B cell (primary cell): ENCODE measurements at regions of chr2 and their contacts with region 1.

Region 1: DNA sequence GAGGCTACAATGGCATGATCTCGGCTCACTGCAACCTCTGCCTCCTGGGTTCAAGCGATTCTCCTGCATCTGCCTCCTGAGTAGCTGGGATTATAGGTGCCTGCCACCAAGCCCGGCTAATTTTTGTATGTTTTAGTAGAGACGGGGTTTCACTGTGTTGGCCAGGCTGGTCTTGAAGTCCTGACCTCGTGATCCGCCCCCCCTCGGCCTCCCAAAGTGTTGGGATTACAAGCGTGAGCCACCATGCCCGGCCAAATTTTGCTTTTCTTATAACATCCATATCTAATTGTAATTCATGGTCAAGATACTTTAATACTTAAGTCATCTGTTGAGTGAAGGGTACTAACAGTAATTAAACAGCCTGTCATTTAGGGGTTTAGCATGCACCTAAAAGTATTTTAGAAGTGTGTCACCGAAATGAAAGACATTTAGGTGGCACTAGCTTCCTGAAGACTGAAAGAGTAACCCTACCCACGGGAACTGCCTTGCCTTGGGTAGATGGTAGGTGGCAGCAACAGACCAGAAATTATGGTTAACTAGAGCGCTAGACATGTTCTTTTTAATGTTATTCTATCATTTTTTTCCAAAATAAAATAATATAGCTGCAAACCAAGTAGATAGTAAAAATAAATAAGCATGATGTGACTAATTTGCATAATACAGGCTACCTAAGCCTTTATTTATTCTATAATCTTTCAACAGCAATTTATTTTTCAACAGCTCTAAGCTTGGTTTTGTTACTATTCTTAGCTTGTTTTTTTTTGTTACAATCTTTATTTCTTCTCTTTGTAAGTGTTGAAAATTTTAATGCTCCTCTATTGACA is 8.6 kb upstream of the ACYP2 start:
- DNase-seq: peak; percentile 74
- ATAC-seq: peak; percentile 31
- H3K4me3 ChIP-seq: no peak overlapping the region
- H3K4me3 Mint-ChIP-seq: peak overlapping the region; percentile 18
- H3K27ac ChIP-seq: no peak overlapping the region
- H3K27ac Mint-ChIP-seq: peak overlapping the region; percentile 41
- H3K4me1 ChIP-seq: peaks cover 39 to 40% of the 10 kb centered on the region in 2 donors
- H3K4me1 Mint-ChIP-seq: peaks cover 53% of the 10 kb centered on the region
- H3K27me3 ChIP-seq: no peaks in the 10 kb centered on the region
- H3K27me3 Mint-ChIP-seq: no peaks in the 10 kb centered on the region
- CTCF ChIP-seq: peak; percentile 80

Region 2: GRCh38 chr2:53786705-53787612 is 319.9 kb before region 1 on chr2 and contains the starts of genes ASB3 and ERLEC1:
- CTCF ChIA-PET with region 1: no interaction called
- POLR2A ChIA-PET with region 1: no interaction called
- intact Hi-C with region 1: loop called (anchors 5 kb)
- DNase-seq: peak; percentile 92
- ATAC-seq: peak; percentile 92
- H3K4me3 ChIP-seq: peak within 1 kb of the TSS; percentile 77 to 98 (median 93)
- H3K4me3 Mint-ChIP-seq: peak within 1 kb of the TSS; percentile 98
- H3K27ac ChIP-seq: peak within 1 kb of the TSS; percentile 80 to 88
- H3K27ac Mint-ChIP-seq: peak within 1 kb of the TSS; percentile 92
- H3K4me1 ChIP-seq: peaks cover 29 to 33% of the 10 kb centered on the region in 2 donors
- H3K4me1 Mint-ChIP-seq: peaks cover 57% of the 10 kb centered on the region
- H3K27me3 ChIP-seq: no peaks in the 10 kb centered on the region
- H3K27me3 Mint-ChIP-seq: no peaks in the 10 kb centered on the region
- CTCF ChIP-seq: no peak
- total RNA-seq, gene ASB3: 30.7 and 38.4 TPM in 2 replicates
- total RNA-seq, gene ERLEC1: 22.9 and 24.5 TPM in 2 replicates

Region 3: GRCh38 chr2:54092940-54093339 is 13.9 kb before region 1 on chr2:
- CTCF ChIA-PET with region 1: interaction called, 20 read pairs
- POLR2A ChIA-PET with region 1: interaction called, 8 read pairs
- intact Hi-C with region 1: loop called (anchors 2 kb)
- DNase-seq: peak; percentile 51
- ATAC-seq: peak; percentile 59
- H3K4me3 ChIP-seq: peak overlapping the region in 4 of 5 experiments; percentile 16 to 43 (median 20)
- H3K4me3 Mint-ChIP-seq: peak overlapping the region; percentile 66
- H3K27ac ChIP-seq: peak overlapping the region; percentile 71 to 75
- H3K27ac Mint-ChIP-seq: peak overlapping the region; percentile 87
- H3K4me1 ChIP-seq: peaks cover 44 to 49% of the 10 kb centered on the region in 2 donors
- H3K4me1 Mint-ChIP-seq: peaks cover 51% of the 10 kb centered on the region
- H3K27me3 ChIP-seq: no peaks in the 10 kb centered on the region
- H3K27me3 Mint-ChIP-seq: no peaks in the 10 kb centered on the region
- CTCF ChIP-seq: no peak

Region 4: GRCh38 chr2:54239427-54239826 is 132.6 kb after region 1 on chr2:
- CTCF ChIA-PET with region 1: no interaction called
- POLR2A ChIA-PET with region 1: no interaction called
- intact Hi-C with region 1: no loop called
- DNase-seq: no peak
- ATAC-seq: no peak
- H3K4me3 ChIP-seq: no peak overlapping the region
- H3K4me3 Mint-ChIP-seq: no peak overlapping the region
- H3K27ac ChIP-seq: no peak overlapping the region
- H3K27ac Mint-ChIP-seq: no peak overlapping the region
- H3K4me1 ChIP-seq: no peaks in the 10 kb centered on the region
- H3K4me1 Mint-ChIP-seq: no peaks in the 10 kb centered on the region
- H3K27me3 ChIP-seq: no peaks in the 10 kb centered on the region
- H3K27me3 Mint-ChIP-seq: no peaks in the 10 kb centered on the region
- CTCF ChIP-seq: no peak

Region 5: DNA sequence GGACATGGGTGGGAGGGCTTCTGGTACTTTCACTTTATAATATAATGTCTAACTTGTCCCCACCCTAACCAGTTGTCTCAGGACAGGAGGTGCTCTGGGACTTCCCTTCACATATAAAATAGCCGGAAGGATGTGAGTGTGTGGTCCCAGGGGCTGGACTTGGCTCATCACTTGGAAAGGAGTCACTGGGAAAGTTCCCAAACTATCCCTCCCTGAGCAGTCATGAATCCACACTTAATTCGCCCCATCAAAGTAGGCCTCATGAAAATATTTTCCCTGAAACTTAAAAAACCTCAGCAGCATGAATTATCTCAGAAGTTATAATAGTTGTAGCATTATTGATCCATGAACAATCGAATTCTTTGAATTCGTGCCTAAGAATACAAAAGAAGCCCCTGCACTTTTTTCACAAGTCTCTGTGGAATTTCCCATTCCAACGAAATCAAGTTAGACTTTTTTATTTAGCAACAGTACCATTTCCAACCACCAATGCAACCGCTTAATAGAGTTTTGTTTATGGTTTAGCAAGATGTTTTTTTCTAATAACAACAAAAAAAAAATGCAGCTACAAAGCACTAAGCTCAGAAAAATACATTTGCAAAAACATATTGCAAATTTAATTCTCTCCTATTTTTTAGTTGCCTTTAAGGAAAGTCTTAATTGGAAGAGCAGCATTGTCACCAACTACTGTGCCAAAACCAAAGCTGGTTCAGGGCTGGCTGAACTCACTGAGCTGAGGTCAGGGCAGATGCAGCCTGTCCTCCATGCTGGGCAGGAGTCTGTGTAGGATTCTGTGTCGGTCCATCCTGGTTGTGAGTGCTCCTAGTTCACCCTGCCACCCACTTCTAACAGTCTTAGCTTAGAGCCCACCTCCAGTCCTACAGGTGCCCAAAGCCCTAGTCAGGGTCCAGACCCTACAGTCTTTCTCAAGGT is 280.5 kb after region 1 on chr2:
- CTCF ChIA-PET with region 1: no interaction called
- POLR2A ChIA-PET with region 1: no interaction called
- intact Hi-C with region 1: no loop called
- DNase-seq: no peak
- ATAC-seq: no peak
- H3K4me3 ChIP-seq: no peak overlapping the region
- H3K4me3 Mint-ChIP-seq: no peak overlapping the region
- H3K27ac ChIP-seq: no peak overlapping the region
- H3K27ac Mint-ChIP-seq: no peak overlapping the region
- H3K4me1 ChIP-seq: no peaks in the 10 kb centered on the region
- H3K4me1 Mint-ChIP-seq: no peaks in the 10 kb centered on the region
- H3K27me3 ChIP-seq: no peaks in the 10 kb centered on the region
- H3K27me3 Mint-ChIP-seq: peaks cover 6% of the 10 kb centered on the region
- CTCF ChIP-seq: no peak

Region 6: GRCh38 chr2:54522624-54523281 is 415.9 kb after region 1 on chr2:
- CTCF ChIA-PET with region 1: interaction called, 39 read pairs
- POLR2A ChIA-PET with region 1: no interaction called
- intact Hi-C with region 1: loop called (anchors 2 kb)
- DNase-seq: peak; percentile 84
- ATAC-seq: peak; percentile 95
- H3K4me3 ChIP-seq: no peak overlapping the region
- H3K4me3 Mint-ChIP-seq: no peak overlapping the region
- H3K27ac ChIP-seq: no peak overlapping the region
- H3K27ac Mint-ChIP-seq: peak overlapping the region; percentile 72
- H3K4me1 ChIP-seq: no peaks in the 10 kb centered on the region
- H3K4me1 Mint-ChIP-seq: peaks cover 9% of the 10 kb centered on the region
- H3K27me3 ChIP-seq: no peaks in the 10 kb centered on the region
- H3K27me3 Mint-ChIP-seq: peaks cover 10% of the 10 kb centered on the region
- CTCF ChIP-seq: peak; percentile 85

Region 7: GRCh38 chr2:54665436-54665856 is 558.6 kb after region 1 on chr2:
- CTCF ChIA-PET with region 1: interaction called, 23 read pairs
- POLR2A ChIA-PET with region 1: no interaction called
- intact Hi-C with region 1: no loop called
- DNase-seq: peak; percentile 65
- ATAC-seq: peak; percentile 60
- H3K4me3 ChIP-seq: no peak overlapping the region
- H3K4me3 Mint-ChIP-seq: no peak overlapping the region
- H3K27ac ChIP-seq: no peak overlapping the region
- H3K27ac Mint-ChIP-seq: no peak overlapping the region
- H3K4me1 ChIP-seq: no peaks in the 10 kb centered on the region
- H3K4me1 Mint-ChIP-seq: no peaks in the 10 kb centered on the region
- H3K27me3 ChIP-seq: no peaks in the 10 kb centered on the region
- H3K27me3 Mint-ChIP-seq: no peaks in the 10 kb centered on the region
- CTCF ChIP-seq: peak; percentile 76

Region 8: GRCh38 chr2:54838585-54839035 is 731.8 kb after region 1 on chr2:
- CTCF ChIA-PET with region 1: interaction called, 57 read pairs
- POLR2A ChIA-PET with region 1: no interaction called
- intact Hi-C with region 1: no loop called
- DNase-seq: peak; percentile 78
- ATAC-seq: peak; percentile 83
- H3K4me3 ChIP-seq: no peak overlapping the region
- H3K4me3 Mint-ChIP-seq: no peak overlapping the region
- H3K27ac ChIP-seq: no peak overlapping the region
- H3K27ac Mint-ChIP-seq: peak overlapping the region; percentile 46
- H3K4me1 ChIP-seq: peaks cover 0 to 4% of the 10 kb centered on the region in 2 donors
- H3K4me1 Mint-ChIP-seq: peaks cover 4% of the 10 kb centered on the region
- H3K27me3 ChIP-seq: no peaks in the 10 kb centered on the region
- H3K27me3 Mint-ChIP-seq: no peaks in the 10 kb centered on the region
- CTCF ChIP-seq: peak; percentile 97

Region 9: GRCh38 chr2:55175254-55176025 is 1068.6 kb after region 1 on chr2:
- CTCF ChIA-PET with region 1: interaction called, 5 read pairs
- POLR2A ChIA-PET with region 1: no interaction called
- intact Hi-C with region 1: loop called (anchors 10 kb)
- DNase-seq: peak; percentile 68
- ATAC-seq: peak; percentile 88
- H3K4me3 ChIP-seq: peak overlapping the region in 1 of 5 experiments; percentile 34
- H3K4me3 Mint-ChIP-seq: peak overlapping the region; percentile 11
- H3K27ac ChIP-seq: no peak overlapping the region
- H3K27ac Mint-ChIP-seq: no peak overlapping the region
- H3K4me1 ChIP-seq: peaks cover 0 to 4% of the 10 kb centered on the region in 2 donors
- H3K4me1 Mint-ChIP-seq: peaks cover 7% of the 10 kb centered on the region
- H3K27me3 ChIP-seq: no peaks in the 10 kb centered on the region
- H3K27me3 Mint-ChIP-seq: no peaks in the 10 kb centered on the region
- CTCF ChIP-seq: peak; percentile 74